Gastrocnemius medialis (tissue), 4 donors: ENCODE measurements at regions of chr4 and their contacts with region 1.

Region 1: GRCh38 chr4:183797445-183798300 is 107.4 kb upstream of the STOX2 start:
- DNase-seq: no peak
- ATAC-seq: peak; percentile 24 to 45
- H3K4me3 ChIP-seq: peak overlapping the region; percentile 45 to 61 (median 56)
- H3K27ac ChIP-seq: peak overlapping the region in 2 of 4 donors; percentile 32 to 64
- H3K4me1 ChIP-seq: no peaks in the 10 kb centered on the region
- H3K27me3 ChIP-seq: peaks cover 4 to 34% (median 31%) of the 10 kb centered on the region in 3 donors
- CTCF ChIP-seq: no peak
- POLR2A ChIP-seq: no peak

Region 2: GRCh38 chr4:183729430-183730328 is 68.0 kb before region 1 on chr4:
- in situ Hi-C with region 1: no loop called
- intact Hi-C with region 1: loop called (anchors 5 kb)
- DNase-seq: no peak
- ATAC-seq: no peak
- H3K4me3 ChIP-seq: no peak overlapping the region
- H3K27ac ChIP-seq: no peak overlapping the region
- H3K4me1 ChIP-seq: no peaks in the 10 kb centered on the region
- H3K27me3 ChIP-seq: no peaks in the 10 kb centered on the region
- CTCF ChIP-seq: no peak
- POLR2A ChIP-seq: no peak